ENCODE measurements at regions of chr7 and their contacts with region 1.

Region 1: GRCh38 chr7:157010588-157011332 is at the start of gene MNX1:
- DNase-seq: peak; percentile 64
- H3K4me3 Mint-ChIP-seq: peak within 1 kb of the TSS; percentile 51
- H3K27ac Mint-ChIP-seq: no peak within 1 kb of the TSS
- H3K4me1 Mint-ChIP-seq: peaks cover 14% of the 10 kb centered on the region
- H3K27me3 Mint-ChIP-seq: peaks cover 73% of the 10 kb centered on the region
- total RNA-seq, gene MNX1: not detected

Region 2: DNA sequence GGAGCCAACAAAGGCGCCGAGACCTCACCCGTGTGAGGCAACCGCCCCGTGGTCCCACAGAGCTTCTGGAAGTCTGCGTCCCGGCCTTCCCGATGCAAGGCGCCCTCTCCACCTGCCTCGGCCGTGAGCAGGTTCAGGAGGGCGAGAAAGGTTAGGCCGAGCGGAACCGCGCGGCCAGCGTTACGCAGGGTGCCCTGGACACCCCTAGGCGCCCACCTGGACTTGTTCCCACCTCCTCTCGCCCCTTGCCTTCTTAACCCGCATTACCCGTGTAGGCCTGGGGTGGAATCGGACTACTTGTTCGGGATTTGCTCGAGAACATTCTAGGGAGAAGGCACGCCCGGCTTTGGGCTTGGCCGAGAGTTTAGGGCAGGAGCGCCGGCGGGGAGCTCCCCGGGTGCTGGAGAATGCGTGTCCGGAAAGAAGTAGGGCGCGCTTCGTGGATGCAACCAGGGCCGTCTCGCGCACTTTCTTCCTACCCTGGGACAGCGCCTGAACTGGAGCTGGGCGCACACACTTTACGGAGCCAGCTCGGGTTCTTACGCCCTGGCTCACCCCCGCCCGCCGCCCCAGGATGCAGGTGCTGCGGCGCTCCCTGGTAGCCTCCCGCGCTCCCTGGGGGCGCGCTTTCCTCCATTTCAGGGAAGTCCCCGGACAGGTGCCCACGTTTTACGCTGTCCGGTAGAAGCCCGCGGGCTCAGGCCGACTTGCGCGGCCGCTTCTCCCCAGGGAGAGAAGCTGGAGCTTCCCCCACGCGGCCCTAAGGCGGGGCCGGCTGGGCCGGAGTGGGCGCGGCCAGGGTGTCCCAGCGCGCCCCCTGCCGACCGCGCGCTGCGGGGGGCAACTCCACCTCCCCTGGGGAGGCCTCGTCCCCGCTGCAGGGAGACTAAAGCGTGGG is 1638.6 kb before region 1 on chr7:
- CTCF ChIA-PET with region 1: no interaction called
- POLR2A ChIA-PET with region 1: no interaction called
- intact Hi-C with region 1: loop called (anchors 10 kb)
- DNase-seq: peak; percentile 20
- H3K4me3 Mint-ChIP-seq: no peak overlapping the region
- H3K27ac Mint-ChIP-seq: no peak overlapping the region
- H3K4me1 Mint-ChIP-seq: peaks cover 30% of the 10 kb centered on the region
- H3K27me3 Mint-ChIP-seq: peaks cover 68% of the 10 kb centered on the region

Region 3: GRCh38 chr7:155456738-155457564 is 1553.8 kb before region 1 on chr7:
- CTCF ChIA-PET with region 1: no interaction called
- POLR2A ChIA-PET with region 1: no interaction called
- intact Hi-C with region 1: loop called (anchors 5 kb)
- DNase-seq: peak; percentile 56
- H3K4me3 Mint-ChIP-seq: peak overlapping the region; percentile 56
- H3K27ac Mint-ChIP-seq: no peak overlapping the region
- H3K4me1 Mint-ChIP-seq: peaks cover 27% of the 10 kb centered on the region
- H3K27me3 Mint-ChIP-seq: peaks cover 73% of the 10 kb centered on the region

Region 4: DNA sequence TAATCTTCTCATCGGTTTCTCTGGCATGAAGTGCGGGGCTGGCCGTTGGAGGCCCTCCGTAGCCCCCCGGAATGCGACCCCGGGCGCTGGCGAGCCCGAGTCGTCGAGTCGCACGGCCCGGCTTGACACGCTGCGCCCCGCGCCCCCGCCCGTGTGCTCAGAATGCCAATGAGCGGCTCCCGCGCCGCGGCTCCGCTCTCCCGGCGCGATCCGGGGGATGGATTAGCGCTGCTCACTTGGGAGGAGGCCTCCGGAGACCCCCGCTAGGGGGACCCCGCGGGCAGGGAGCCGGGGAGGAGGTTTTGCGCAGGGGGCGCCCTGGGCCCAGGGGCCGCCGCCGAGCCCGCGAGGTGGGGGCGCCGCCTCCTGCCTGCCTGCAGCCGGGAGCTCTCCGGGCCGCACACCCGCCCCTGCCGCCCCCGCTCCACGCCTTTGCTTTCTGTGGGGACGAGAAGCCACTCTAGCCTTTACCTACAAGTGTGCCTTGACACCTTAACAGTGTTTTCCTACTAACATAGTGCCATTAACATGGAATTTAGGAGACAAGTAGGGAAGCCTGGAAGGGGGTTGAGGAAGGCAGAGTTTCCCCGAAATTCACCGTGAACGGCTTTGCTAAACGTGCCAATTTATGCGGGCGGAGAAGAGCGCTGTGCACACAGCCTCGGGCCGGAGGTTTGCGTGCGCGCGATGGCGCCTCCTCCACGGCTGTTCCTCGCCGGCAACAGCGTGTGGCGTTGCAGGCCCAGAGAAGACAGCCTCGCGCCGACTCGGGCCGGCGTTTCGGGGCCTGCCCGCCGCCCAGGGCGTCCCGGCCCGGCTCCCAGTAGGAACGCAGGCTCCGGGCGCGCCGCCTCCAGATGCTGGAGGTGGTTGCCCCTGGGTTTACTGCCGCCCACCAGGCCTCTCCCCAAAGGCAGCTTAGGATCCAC is 1205.6 kb before region 1 on chr7:
- CTCF ChIA-PET with region 1: no interaction called
- POLR2A ChIA-PET with region 1: no interaction called
- intact Hi-C with region 1: loop called (anchors 5 kb)
- DNase-seq: peak; percentile 63
- H3K4me3 Mint-ChIP-seq: peak overlapping the region; percentile 32
- H3K27ac Mint-ChIP-seq: no peak overlapping the region
- H3K4me1 Mint-ChIP-seq: peaks cover 23% of the 10 kb centered on the region
- H3K27me3 Mint-ChIP-seq: peaks cover 55% of the 10 kb centered on the region

Region 5: DNA sequence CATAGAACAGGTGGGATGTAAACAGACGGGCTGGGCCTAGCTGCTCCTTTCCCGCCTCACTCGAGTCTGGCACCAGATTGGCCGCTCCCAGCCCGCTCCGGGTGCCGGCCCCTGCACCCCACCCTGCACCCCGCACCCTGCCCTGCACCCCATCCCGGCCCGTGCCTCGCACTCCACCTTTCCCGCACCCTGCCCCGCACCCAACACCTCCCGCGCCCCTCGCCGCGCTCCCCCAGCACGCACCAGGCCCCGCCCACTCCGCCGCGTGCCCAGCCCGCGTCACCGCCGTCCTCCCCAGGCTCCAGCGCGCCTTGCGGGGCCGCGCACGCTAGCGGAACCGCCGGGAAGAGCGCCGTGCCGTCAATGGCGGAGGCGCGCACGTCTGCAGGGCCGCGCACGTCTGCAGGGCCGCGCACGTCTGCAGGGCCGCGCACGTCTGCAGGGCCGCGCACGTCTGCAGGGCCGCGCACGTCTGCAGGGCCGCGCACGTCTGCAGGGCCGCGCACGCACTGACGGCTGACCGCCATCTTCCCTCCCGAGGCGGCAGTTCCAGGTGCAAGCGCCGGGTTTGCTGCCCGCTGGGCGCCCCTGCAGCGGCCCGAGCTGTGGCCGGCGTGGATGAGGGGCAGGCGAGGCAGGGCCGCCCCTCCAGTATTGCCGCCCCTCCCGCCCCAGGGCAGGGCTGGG is 127.8 kb after region 1 on chr7 and contains the start of gene UBE3C:
- CTCF ChIA-PET with region 1: no interaction called
- POLR2A ChIA-PET with region 1: interaction called, 4 read pairs
- intact Hi-C with region 1: loop called (anchors 5 kb)
- DNase-seq: peak; percentile 91
- H3K4me3 Mint-ChIP-seq: peak within 1 kb of the TSS; percentile 79
- H3K27ac Mint-ChIP-seq: peak within 1 kb of the TSS; percentile 91
- H3K4me1 Mint-ChIP-seq: peaks cover 37% of the 10 kb centered on the region
- H3K27me3 Mint-ChIP-seq: no peaks in the 10 kb centered on the region
- total RNA-seq, gene UBE3C: 59.8 to 59.9 TPM

Region 6: GRCh38 chr7:157689269-157690057 is 678.7 kb after region 1 on chr7:
- CTCF ChIA-PET with region 1: no interaction called
- POLR2A ChIA-PET with region 1: no interaction called
- intact Hi-C with region 1: loop called (anchors 5 kb)
- DNase-seq: no peak
- H3K4me3 Mint-ChIP-seq: no peak overlapping the region
- H3K27ac Mint-ChIP-seq: no peak overlapping the region
- H3K4me1 Mint-ChIP-seq: peaks cover 30% of the 10 kb centered on the region
- H3K27me3 Mint-ChIP-seq: peaks cover 43% of the 10 kb centered on the region